AG04450 (cell line): ENCODE measurements at regions of chr1 and their contacts with region 1.

Region 1: GRCh38 chr1:97243973-97244560 is 522.5 kb downstream of the PTBP2 start:
- DNase-seq: no peak
- H3K4me3 ChIP-seq: no peak overlapping the region
- H3K27ac ChIP-seq: no peak overlapping the region
- H3K27me3 ChIP-seq: no peaks in the 10 kb centered on the region
- CTCF ChIP-seq: peak; percentile 61

Region 2: DNA sequence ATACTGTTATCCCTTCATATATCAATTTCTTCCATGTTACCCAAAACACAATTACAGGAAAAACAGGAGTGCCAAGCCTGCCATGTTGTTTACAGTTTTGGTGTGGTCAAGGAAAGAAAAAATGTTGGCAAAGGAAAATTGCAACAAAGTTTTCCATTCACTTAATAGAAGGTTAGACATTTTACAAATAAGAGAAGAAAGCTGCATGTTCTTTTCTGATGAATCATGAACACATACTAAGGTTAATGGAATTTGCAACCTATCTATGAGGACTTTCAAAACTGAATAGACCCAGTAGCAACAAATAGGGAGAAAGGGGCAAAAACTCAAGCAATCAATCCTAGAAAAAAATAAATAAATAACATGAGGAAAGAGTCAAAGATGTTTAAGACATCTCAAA is 120.0 kb after region 1 on chr1:
- CTCF ChIA-PET with region 1: no interaction called
- POLR2A ChIA-PET with region 1: no interaction called
- DNase-seq: no peak
- H3K4me3 ChIP-seq: no peak overlapping the region
- H3K27ac ChIP-seq: no peak overlapping the region
- H3K27me3 ChIP-seq: no peaks in the 10 kb centered on the region
- CTCF ChIP-seq: no peak

Region 3: GRCh38 chr1:97524211-97524610 is 280.1 kb after region 1 on chr1:
- CTCF ChIA-PET with region 1: interaction called, 16 read pairs
- POLR2A ChIA-PET with region 1: no interaction called
- DNase-seq: no peak
- H3K4me3 ChIP-seq: no peak overlapping the region
- H3K27ac ChIP-seq: no peak overlapping the region
- H3K27me3 ChIP-seq: no peaks in the 10 kb centered on the region
- CTCF ChIP-seq: no peak

Region 4: DNA sequence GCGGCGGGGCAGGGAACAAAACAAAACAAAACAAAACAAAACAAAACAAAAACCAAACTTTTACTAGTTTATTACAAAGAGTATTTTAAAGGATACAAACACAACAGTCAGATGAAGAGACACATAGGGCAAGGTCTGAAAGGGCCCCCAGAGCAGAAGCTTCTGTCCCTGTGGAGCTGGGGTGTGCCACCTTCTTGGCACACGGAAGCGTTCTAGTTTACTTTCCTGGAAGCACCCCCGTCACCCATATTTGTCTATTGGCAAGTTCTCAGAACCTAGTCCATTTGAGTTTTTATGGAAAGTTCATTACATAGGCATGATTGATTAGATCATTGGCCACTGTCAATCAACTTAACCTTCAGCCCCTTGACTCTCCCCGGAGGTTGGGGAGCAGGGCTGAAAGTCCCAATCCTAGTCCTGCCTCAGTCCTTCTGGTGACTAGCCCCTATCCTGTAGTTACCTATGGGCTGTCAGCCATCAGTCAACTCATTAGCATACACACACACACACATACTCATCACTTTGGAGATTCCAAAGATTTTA is 296.4 kb after region 1 on chr1:
- CTCF ChIA-PET with region 1: no interaction called
- POLR2A ChIA-PET with region 1: no interaction called
- DNase-seq: no peak
- H3K4me3 ChIP-seq: no peak overlapping the region
- H3K27ac ChIP-seq: no peak overlapping the region
- H3K27me3 ChIP-seq: no peaks in the 10 kb centered on the region
- CTCF ChIP-seq: no peak